ENCODE measurements at regions of chr12 and their contacts with region 1.

Region 1: GRCh38 chr12:569803-570434 is 93.3 kb downstream of the NINJ2 start:
- DNase-seq: peak; percentile 66
- ATAC-seq: peak; percentile 71
- H3K4me3 ChIP-seq: peak overlapping the region; percentile 67 to 80 (median 73)
- H3K27ac ChIP-seq: peak overlapping the region; percentile 86
- H3K4me1 ChIP-seq: peaks cover 49% of the 10 kb centered on the region
- H3K27me3 ChIP-seq: no peaks in the 10 kb centered on the region; a peak in 1 of 5 replicates
- CTCF ChIP-seq: peak; percentile 99
- EP300 ChIP-seq: peak in 1 of 2 experiments; percentile 25; a peak in 1 of 4 replicates
- POLR2A ChIP-seq: no peak
- RAD21 ChIP-seq: peak; percentile 97

Region 2: GRCh38 chr12:452667-453210 is 117.2 kb before region 1 on chr12:
- CTCF ChIA-PET with region 1: interaction called, 16 read pairs
- POLR2A ChIA-PET with region 1: no interaction called
- in situ Hi-C with region 1: no loop called
- intact Hi-C with region 1: no loop called
- DNase-seq: no peak
- ATAC-seq: peak; percentile 70
- H3K4me3 ChIP-seq: no peak overlapping the region
- H3K27ac ChIP-seq: no peak overlapping the region
- H3K4me1 ChIP-seq: no peaks in the 10 kb centered on the region
- H3K27me3 ChIP-seq: peaks cover 0 to 2% of the 10 kb centered on the region in 2 experiments; a peak in 2 of 5 replicates
- CTCF ChIP-seq: peak; percentile 80
- EP300 ChIP-seq: no peak
- POLR2A ChIP-seq: no peak
- RAD21 ChIP-seq: 0 out of 2 replicates have a peak, but pooled peaks have one; percentile 19

Region 3: DNA sequence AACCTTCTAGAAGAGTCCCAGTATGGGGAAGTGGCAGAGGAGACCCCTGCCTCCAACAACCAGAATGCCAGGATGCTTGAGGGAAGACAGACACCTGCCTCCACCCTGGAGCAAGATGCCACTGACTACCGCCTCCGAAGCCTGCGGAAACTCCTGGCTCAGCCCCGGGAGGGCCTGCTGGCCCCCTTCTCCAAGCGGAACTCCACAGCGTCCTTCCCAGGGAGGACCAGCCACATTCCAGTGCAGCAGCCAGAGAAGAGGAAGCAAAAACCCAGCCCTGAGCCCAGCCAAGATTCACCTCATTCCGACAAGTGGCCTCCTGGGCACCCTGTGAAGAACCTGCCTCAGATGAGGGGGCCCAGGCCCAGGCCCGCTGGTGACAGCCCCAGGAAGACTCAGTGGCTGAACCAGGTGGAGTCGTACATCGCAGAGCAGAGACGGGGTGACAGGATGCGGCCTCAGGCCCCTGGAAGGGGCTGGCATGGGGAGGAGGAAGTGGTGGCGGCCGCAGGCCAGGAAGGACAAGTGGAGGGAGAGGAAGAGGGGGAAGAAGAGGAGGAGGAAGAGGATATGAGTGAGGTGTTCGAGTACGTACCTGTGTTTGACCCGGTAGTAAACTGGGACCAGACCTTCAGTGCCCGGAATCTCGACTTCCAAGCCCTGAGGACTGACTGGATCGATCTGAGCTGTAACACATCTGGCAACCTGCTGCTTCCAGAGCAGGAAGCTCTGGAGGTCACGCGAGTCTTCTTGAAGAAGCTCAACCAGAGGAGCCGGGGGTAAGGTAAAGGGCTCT is 16.5 kb before region 1 on chr12:
- CTCF ChIA-PET with region 1: no interaction called
- POLR2A ChIA-PET with region 1: no interaction called
- in situ Hi-C with region 1: no loop called
- intact Hi-C with region 1: no loop called
- DNase-seq: no peak
- ATAC-seq: no peak
- H3K4me3 ChIP-seq: no peak overlapping the region
- H3K27ac ChIP-seq: no peak overlapping the region
- H3K4me1 ChIP-seq: peaks cover 14% of the 10 kb centered on the region
- H3K27me3 ChIP-seq: no peaks in the 10 kb centered on the region
- CTCF ChIP-seq: no peak
- EP300 ChIP-seq: no peak
- POLR2A ChIP-seq: no peak
- RAD21 ChIP-seq: no peak

Region 4: GRCh38 chr12:751192-751998 is 181.5 kb after region 1 on chr12:
- CTCF ChIA-PET with region 1: interaction called, 28 read pairs
- POLR2A ChIA-PET with region 1: interaction called, 42 read pairs
- in situ Hi-C with region 1: loop called (anchors 5 kb)
- intact Hi-C with region 1: loop called (anchors 1 kb)
- DNase-seq: peak; percentile 91
- ATAC-seq: peak; percentile 71
- H3K4me3 ChIP-seq: peak overlapping the region; percentile 65 to 71 (median 67)
- H3K27ac ChIP-seq: peak overlapping the region; percentile 64
- H3K4me1 ChIP-seq: peaks cover 17% of the 10 kb centered on the region
- H3K27me3 ChIP-seq: no peaks in the 10 kb centered on the region; a peak in 1 of 5 replicates
- CTCF ChIP-seq: peak; percentile 97
- EP300 ChIP-seq: peak in 1 of 2 experiments; percentile 34; a peak in 2 of 4 replicates
- POLR2A ChIP-seq: peak; percentile 61 to 68
- RAD21 ChIP-seq: peak; percentile 94

Region 5: DNA sequence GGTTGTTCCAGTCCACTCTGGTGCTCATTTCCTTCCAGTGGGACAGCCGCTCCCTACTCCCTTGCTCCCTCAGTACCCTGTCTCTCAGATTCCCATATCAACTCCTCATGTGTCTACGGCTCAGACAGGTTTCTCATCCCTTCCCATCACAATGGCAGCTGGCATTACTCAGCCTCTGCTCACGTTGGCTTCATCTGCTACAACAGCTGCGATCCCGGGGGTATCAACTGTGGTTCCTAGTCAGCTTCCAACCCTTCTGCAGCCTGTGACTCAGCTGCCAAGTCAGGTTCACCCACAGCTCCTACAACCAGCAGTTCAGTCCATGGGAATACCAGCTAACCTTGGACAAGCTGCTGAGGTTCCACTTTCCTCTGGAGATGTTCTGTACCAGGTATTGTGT is 309.7 kb after region 1 on chr12:
- CTCF ChIA-PET with region 1: no interaction called
- POLR2A ChIA-PET with region 1: no interaction called
- in situ Hi-C with region 1: loop called (anchors 10 kb)
- intact Hi-C with region 1: no loop called
- DNase-seq: no peak
- ATAC-seq: no peak
- H3K4me3 ChIP-seq: no peak overlapping the region
- H3K27ac ChIP-seq: no peak overlapping the region
- H3K4me1 ChIP-seq: no peaks in the 10 kb centered on the region
- H3K27me3 ChIP-seq: no peaks in the 10 kb centered on the region
- CTCF ChIP-seq: no peak
- EP300 ChIP-seq: no peak
- POLR2A ChIP-seq: no peak
- RAD21 ChIP-seq: no peak

Region 6: DNA sequence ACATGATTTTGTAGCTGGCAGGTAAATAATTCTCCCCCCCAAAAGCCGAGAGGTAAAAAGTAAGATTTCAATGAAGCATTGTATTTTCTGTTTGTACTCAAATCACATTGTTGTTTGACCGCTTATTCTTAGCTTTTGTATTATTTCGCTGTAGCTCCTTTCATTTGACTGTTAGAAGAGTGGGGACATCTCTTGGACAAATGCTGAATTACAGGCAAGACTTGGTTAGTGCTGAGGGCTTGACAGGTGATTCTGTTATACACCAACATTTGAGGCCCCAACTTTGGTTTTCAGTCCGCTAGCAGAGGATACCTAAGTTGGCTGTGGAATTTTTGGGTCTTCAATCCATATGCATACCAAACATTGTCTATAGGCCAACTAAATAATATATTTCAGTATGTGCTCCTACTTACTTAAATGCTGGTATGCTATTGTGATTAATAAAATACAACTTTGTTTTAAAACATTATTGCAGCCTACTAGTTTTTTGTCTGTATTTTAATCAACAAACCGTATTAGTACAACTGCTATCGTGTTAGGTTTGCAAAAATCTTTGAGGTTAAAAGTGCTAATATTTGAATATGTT is 523.3 kb after region 1 on chr12:
- CTCF ChIA-PET with region 1: no interaction called
- POLR2A ChIA-PET with region 1: no interaction called
- in situ Hi-C with region 1: loop called (anchors 25 kb)
- intact Hi-C with region 1: no loop called
- DNase-seq: peak; percentile 71
- ATAC-seq: peak; percentile 88
- H3K4me3 ChIP-seq: no peak overlapping the region
- H3K27ac ChIP-seq: no peak overlapping the region
- H3K4me1 ChIP-seq: peaks cover 8% of the 10 kb centered on the region; the same call in 1 of the 2 replicates
- H3K27me3 ChIP-seq: no peaks in the 10 kb centered on the region
- CTCF ChIP-seq: peak; percentile 74
- EP300 ChIP-seq: no peak
- POLR2A ChIP-seq: no peak
- RAD21 ChIP-seq: peak; percentile 48; the same call in 1 of the 2 replicates